Mammary epithelial cell (primary cell): ENCODE measurements at regions of chr19 and their contacts with region 1.

Region 1: GRCh38 chr19:17859533-17860330 is at the start of gene RPL18A:
- DNase-seq: peak; percentile 100
- H3K4me3 ChIP-seq: peak within 1 kb of the TSS; percentile 95 to 98 (median 97)
- H3K27ac ChIP-seq: peak within 1 kb of the TSS; percentile 84
- H3K4me1 ChIP-seq: peaks cover 8% of the 10 kb centered on the region
- H3K27me3 ChIP-seq: no peaks in the 10 kb centered on the region
- CTCF ChIP-seq: peak; percentile 58 to 95
- total RNA-seq, gene RPL18A: 1,272 to 2,030 TPM

Region 2: GRCh38 chr19:17448131-17448967 is 411.4 kb before region 1 on chr19 and contains the start of gene TMEM221:
- CTCF ChIA-PET with region 1: no interaction called
- dilution Hi-C with region 1: no loop called
- in situ Hi-C with region 1: loop called in 1 of 2 experiments (anchors 10 kb)
- intact Hi-C with region 1: loop called (anchors 2 kb)
- DNase-seq: no peak
- H3K4me3 ChIP-seq: peak within 1 kb of the TSS; percentile 37 to 46 (median 43)
- H3K27ac ChIP-seq: no peak within 1 kb of the TSS
- H3K4me1 ChIP-seq: peaks cover 8% of the 10 kb centered on the region
- H3K27me3 ChIP-seq: no peaks in the 10 kb centered on the region
- CTCF ChIP-seq: peak in 1 of 2 donors; percentile 58
- total RNA-seq, gene TMEM221: 0.17 to 1.4 TPM

Region 3: DNA sequence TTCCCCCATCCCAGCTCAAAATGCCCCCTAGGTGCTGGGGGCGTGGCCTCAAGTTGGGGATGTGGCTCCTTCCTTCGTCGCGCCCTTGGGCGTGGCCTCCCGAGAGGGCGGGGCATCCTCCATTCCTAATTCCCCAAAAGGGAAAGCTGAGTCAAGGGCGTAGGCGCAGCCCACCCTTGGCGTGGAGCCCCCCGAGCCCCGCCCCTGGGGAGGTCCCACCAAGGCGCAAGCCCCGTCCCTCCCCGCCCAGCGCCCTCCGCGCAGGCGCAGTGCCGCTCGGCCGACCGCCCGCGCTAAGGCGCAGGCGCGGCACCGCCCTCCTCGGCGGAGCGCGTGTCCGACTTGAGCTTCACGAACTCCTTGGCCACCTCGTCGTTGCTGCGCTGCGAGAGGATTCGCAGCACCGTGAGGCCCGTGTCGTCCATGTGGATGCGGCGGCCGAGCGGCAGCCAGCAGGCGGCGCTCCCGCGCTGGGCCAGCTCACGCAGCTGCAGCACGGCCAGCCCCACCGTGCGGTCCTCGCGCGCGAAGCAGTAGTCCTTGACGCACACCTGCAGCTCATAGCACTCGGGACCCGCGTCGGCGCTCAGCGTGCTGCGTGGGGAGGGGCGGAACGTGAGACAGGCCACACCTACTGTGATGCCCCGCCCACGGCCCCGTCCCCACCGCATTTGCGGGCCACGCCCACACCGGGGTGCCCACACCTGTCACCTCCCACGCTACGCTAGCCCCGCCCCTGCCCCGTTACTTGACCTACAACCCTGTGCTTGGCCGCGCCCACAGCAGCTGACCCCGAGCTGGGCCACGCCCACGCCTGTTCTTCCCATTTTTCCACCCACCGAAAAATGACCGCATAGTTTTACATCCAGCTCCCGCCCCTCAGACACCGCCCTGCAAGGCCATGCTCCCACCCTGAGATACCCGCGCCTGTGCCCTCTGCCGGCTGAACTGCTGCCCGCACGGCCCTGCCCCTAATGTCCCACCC is 253.7 kb before region 1 on chr19:
- CTCF ChIA-PET with region 1: interaction called, 11 read pairs
- dilution Hi-C with region 1: no loop called
- in situ Hi-C with region 1: no loop called
- intact Hi-C with region 1: loop called (anchors 5 kb)
- DNase-seq: peak; percentile 77
- H3K4me3 ChIP-seq: peak overlapping the region in 2 of 3 experiments; percentile 8 to 36
- H3K27ac ChIP-seq: no peak overlapping the region
- H3K4me1 ChIP-seq: peaks cover 6% of the 10 kb centered on the region
- H3K27me3 ChIP-seq: peaks cover 4% of the 10 kb centered on the region
- CTCF ChIP-seq: peak; percentile 40 to 62

Region 4: GRCh38 chr19:17747205-17748098 is 112.3 kb before region 1 on chr19:
- CTCF ChIA-PET with region 1: no interaction called
- dilution Hi-C with region 1: no loop called
- in situ Hi-C with region 1: no loop called
- intact Hi-C with region 1: no loop called
- DNase-seq: peak; percentile 87
- H3K4me3 ChIP-seq: peak overlapping the region; percentile 33 to 42 (median 37)
- H3K27ac ChIP-seq: no peak overlapping the region
- H3K4me1 ChIP-seq: no peaks in the 10 kb centered on the region
- H3K27me3 ChIP-seq: no peaks in the 10 kb centered on the region
- CTCF ChIP-seq: no peak

Region 5: DNA sequence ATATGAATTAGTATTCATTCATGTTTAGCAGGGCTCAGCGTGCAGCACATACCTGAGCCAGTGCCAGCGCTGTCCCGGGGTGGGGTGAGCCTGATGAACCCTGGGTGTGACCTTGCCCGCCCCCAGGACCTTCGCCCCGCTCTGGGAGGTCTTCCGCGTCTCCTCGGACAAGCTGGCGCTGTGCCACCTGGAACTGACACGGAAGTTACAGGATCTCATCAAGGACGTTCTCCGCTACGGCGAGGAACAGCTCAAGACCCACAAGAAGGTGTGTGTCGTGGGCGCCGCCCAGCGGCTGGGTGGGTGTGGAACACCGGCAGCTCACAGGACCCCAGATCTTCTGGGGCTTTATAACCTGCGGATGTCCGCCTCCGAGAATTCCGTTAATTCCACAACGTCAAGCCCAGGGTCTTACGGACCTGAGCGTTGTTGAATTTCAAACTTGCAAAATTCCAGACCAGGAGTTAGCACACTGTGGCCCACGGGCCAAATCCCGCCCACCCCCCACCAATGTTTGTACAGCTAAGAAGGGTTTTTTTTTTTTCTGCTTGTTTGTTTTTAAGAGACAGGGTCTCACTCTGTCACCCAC is 93.1 kb before region 1 on chr19:
- CTCF ChIA-PET with region 1: interaction called, 6 read pairs
- dilution Hi-C with region 1: loop called (anchors 10 kb)
- in situ Hi-C with region 1: no loop called
- intact Hi-C with region 1: loop called (anchors 2 kb)
- DNase-seq: peak; percentile 68
- H3K4me3 ChIP-seq: peak overlapping the region; percentile 1 to 49 (median 40)
- H3K27ac ChIP-seq: no peak overlapping the region
- H3K4me1 ChIP-seq: peaks cover 5% of the 10 kb centered on the region
- H3K27me3 ChIP-seq: no peaks in the 10 kb centered on the region
- CTCF ChIP-seq: peak; percentile 86 to 99

Region 6: GRCh38 chr19:17840019-17840418 is 19.7 kb before region 1 on chr19:
- CTCF ChIA-PET with region 1: interaction called, 17 read pairs
- dilution Hi-C with region 1: no loop called
- in situ Hi-C with region 1: no loop called
- intact Hi-C with region 1: no loop called
- DNase-seq: no peak
- H3K4me3 ChIP-seq: no peak overlapping the region
- H3K27ac ChIP-seq: no peak overlapping the region
- H3K4me1 ChIP-seq: peaks cover 6% of the 10 kb centered on the region
- H3K27me3 ChIP-seq: no peaks in the 10 kb centered on the region
- CTCF ChIP-seq: no peak

Region 7: DNA sequence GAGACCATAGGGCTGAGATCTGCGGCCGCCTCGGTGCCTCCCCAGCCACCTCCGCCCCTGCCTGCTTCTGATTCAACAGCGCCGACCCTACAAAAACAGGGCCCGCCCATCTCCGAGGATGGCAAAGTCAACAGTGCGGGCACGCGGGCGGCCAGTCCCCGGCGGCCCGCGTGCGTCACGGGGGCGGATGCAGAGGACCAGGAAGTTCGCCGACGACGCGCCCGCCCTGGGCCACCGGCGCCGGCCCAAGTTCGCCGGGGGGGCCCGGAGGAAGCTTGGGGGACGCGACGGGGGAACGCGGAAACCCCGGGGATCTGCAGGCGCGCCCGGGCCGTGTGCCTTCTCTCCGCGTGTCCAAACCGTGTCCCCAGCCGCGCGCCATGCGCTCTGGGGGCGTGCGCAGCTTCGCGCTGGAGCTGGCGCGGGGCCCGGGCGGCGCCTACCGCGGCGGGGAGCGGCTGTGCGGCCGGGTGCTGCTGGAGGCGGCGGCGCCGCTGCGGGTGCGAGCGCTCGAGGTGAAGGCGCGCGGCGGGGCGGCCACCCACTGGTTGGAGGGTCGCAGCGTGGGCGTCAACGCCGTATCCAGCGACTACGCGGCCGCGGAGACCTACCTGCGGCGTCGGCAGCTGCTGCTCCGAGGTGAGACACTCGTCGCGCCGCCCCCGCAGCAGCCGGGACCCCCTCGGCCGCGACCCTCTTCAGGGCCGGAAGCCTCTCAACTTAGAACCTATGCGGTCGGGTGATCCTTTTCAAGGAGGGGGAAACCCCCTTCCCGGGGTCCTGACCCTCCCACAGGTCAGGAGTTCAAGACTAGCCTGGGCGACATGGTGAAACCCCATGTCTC is 141.4 kb after region 1 on chr19:
- CTCF ChIA-PET with region 1: no interaction called
- dilution Hi-C with region 1: no loop called
- in situ Hi-C with region 1: loop called in 1 of 2 experiments (anchors 10 kb)
- intact Hi-C with region 1: loop called (anchors 1 kb)
- DNase-seq: peak; percentile 84
- H3K4me3 ChIP-seq: peak overlapping the region; percentile 66 to 84 (median 75)
- H3K27ac ChIP-seq: peak overlapping the region; percentile 46
- H3K4me1 ChIP-seq: peaks cover 4% of the 10 kb centered on the region
- H3K27me3 ChIP-seq: no peaks in the 10 kb centered on the region
- CTCF ChIP-seq: no peak